B cell (primary cell): ENCODE measurements at regions of chr2 and their contacts with region 1.

Region 1: DNA sequence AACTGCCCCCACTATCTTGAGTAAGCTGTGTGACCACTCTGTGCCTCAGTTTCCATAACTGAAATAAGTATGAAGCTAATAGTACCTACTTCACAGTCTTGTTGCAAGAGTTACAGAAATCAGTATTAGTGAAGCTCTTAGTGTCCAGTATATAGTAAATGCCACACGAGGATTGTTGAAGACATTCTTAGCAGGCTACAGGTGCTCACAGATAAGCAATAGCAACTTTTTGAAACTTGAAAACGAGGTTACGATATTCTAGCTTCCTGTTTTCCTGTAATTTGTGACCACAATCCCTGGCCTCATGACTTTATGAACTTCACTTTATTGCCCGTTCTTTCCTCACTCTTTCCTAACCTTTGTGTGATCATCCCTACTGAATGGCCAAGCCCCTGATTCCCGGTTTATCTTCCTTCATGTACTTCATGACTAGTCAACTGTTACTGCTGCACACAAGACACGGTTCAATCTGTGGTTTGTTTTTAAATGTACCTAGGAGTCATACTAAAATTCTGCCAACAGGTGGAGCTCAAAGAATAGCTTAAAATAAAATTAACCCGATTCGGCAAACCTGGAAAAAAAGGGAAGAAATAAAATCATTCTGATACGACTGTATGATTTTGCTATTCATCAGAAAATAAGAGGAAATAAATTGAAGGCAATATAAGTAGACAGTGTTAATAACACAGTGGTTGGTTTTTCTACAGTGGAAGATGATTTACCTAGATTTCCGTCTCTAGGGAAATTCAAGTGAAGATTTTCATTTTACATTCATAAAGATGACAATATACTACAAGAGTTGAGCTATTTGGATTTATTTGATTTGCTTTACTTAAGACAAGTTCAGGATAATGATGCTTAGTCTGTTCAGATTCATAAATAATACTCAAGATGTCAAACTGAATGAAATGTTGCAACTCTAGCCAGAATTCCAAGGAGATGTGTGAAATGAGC is 38.1 kb upstream of the STAT1 start:
- DNase-seq: peak; percentile 71
- ATAC-seq: peak; percentile 64
- H3K4me3 ChIP-seq: peak overlapping the region in 1 of 5 experiments; percentile 3
- H3K4me3 Mint-ChIP-seq: no peak overlapping the region
- H3K27ac ChIP-seq: no peak overlapping the region
- H3K27ac Mint-ChIP-seq: no peak overlapping the region
- H3K4me1 ChIP-seq: peaks cover 6 to 10% of the 10 kb centered on the region in 2 donors
- H3K4me1 Mint-ChIP-seq: no peaks in the 10 kb centered on the region
- H3K27me3 ChIP-seq: peaks cover 0 to 10% (median 4%) of the 10 kb centered on the region in 4 experiments
- H3K27me3 Mint-ChIP-seq: peaks cover 21% of the 10 kb centered on the region
- CTCF ChIP-seq: peak; percentile 86

Region 2: DNA sequence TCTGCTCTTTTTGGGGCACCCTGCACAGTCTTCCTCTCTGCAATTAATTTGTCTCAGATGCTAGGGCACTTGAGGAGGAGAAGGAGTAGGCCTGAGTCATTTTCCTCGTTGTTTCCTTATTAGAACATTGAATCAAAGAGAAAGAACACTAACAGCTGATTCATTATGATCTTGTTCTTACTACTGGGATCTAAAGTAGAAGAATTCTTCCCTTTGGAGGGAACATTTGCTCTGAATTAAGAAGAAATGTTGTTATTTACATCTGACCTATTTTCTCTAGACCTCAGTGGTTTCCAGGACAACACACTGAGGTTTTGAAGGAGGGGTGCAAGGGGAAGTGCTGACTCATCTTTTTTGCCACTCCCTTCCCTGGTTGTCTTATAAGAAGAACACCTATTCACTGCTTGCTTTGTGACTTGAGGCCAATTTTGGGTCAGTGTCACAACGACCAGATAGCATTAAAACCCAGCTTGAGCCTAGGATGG is 13.8 kb before region 1 on chr2:
- CTCF ChIA-PET with region 1: interaction called, 17 read pairs
- POLR2A ChIA-PET with region 1: interaction called, 3 read pairs
- intact Hi-C with region 1: no loop called
- DNase-seq: no peak
- ATAC-seq: no peak
- H3K4me3 ChIP-seq: no peak overlapping the region
- H3K4me3 Mint-ChIP-seq: no peak overlapping the region
- H3K27ac ChIP-seq: no peak overlapping the region
- H3K27ac Mint-ChIP-seq: no peak overlapping the region
- H3K4me1 ChIP-seq: no peaks in the 10 kb centered on the region
- H3K4me1 Mint-ChIP-seq: no peaks in the 10 kb centered on the region
- H3K27me3 ChIP-seq: no peaks in the 10 kb centered on the region
- H3K27me3 Mint-ChIP-seq: peaks cover 10% of the 10 kb centered on the region
- CTCF ChIP-seq: no peak

Region 3: DNA sequence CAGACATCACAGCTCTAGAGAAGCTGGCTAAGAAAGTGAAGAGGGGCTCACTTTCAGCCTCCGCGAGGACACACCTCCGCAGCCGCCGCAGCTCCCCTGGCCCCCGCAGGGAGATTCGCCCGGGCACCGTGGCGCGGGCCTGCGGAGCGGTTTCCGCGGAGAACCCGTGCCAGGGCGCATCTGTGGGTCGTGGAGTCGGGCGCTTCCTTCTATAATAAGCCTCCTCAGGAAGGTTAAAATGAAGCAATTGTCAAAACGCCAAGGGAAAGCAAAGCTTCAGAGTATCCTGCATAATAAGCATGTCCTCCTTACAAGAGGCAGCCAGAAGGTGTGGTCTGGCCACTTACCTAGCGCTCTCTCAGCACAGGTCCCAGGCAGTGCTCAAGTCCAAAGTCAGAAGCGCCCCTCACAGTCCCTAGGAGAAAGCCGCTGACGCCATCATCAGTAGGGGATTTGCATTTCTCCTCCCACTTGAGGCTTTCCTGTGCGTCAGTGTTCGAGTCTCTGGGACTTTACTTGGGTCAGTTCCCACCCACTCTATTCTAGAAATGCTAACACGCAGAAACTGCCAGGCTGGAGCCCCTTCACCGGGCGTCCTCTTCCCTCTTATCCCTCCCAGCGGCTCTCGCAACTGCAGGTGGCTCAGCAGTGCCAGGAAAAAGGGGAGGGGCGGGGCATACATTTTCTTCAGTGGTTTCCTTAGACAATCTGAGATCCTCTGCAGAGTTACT is 98.7 kb after region 1 on chr2 and contains the start of gene STAT4:
- CTCF ChIA-PET with region 1: interaction called, 418 read pairs
- POLR2A ChIA-PET with region 1: interaction called, 8 read pairs
- intact Hi-C with region 1: loop called (anchors 1 kb)
- DNase-seq: peak; percentile 88
- ATAC-seq: peak; percentile 91
- H3K4me3 ChIP-seq: peak within 1 kb of the TSS; percentile 52 to 97 (median 72)
- H3K4me3 Mint-ChIP-seq: peak within 1 kb of the TSS; percentile 94
- H3K27ac ChIP-seq: peak within 1 kb of the TSS; percentile 38 to 53
- H3K27ac Mint-ChIP-seq: peak within 1 kb of the TSS; percentile 85
- H3K4me1 ChIP-seq: peaks cover 3 to 16% of the 10 kb centered on the region in 2 donors
- H3K4me1 Mint-ChIP-seq: peaks cover 30% of the 10 kb centered on the region
- H3K27me3 ChIP-seq: no peaks in the 10 kb centered on the region
- H3K27me3 Mint-ChIP-seq: peaks cover 13% of the 10 kb centered on the region
- CTCF ChIP-seq: no peak
- total RNA-seq, gene STAT4: 58.9 and 62.1 TPM in 2 replicates

Region 4: DNA sequence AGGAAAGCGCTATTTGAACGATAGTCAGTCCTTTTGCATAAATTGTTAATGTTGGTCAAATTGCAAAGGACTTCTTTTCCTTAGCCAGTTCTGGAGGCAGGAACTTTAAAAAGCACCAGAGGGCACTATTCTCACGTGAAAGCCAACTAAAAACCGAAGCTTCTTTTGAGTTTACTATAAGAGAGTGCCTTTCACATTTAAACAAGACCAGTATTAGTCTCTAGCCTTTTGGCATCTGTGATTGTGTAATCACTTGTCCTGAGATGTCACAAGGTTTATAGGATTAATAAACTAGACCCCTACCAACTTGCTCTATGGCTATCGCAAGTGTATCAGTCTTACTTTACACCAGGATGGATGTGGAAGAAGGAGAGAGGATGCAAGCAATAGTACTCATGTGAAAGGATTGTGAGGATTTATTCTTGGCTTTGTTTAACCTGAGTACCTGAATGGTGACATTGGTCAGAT is 113.1 kb after region 1 on chr2:
- CTCF ChIA-PET with region 1: interaction called, 21 read pairs
- POLR2A ChIA-PET with region 1: no interaction called
- intact Hi-C with region 1: no loop called
- DNase-seq: peak; percentile 53
- ATAC-seq: peak; percentile 60
- H3K4me3 ChIP-seq: no peak overlapping the region
- H3K4me3 Mint-ChIP-seq: no peak overlapping the region
- H3K27ac ChIP-seq: no peak overlapping the region
- H3K27ac Mint-ChIP-seq: no peak overlapping the region
- H3K4me1 ChIP-seq: no peaks in the 10 kb centered on the region
- H3K4me1 Mint-ChIP-seq: peaks cover 3% of the 10 kb centered on the region
- H3K27me3 ChIP-seq: peaks cover 0 to 5% (median 0%) of the 10 kb centered on the region in 4 experiments
- H3K27me3 Mint-ChIP-seq: peaks cover 9% of the 10 kb centered on the region
- CTCF ChIP-seq: peak; percentile 79

Region 5: DNA sequence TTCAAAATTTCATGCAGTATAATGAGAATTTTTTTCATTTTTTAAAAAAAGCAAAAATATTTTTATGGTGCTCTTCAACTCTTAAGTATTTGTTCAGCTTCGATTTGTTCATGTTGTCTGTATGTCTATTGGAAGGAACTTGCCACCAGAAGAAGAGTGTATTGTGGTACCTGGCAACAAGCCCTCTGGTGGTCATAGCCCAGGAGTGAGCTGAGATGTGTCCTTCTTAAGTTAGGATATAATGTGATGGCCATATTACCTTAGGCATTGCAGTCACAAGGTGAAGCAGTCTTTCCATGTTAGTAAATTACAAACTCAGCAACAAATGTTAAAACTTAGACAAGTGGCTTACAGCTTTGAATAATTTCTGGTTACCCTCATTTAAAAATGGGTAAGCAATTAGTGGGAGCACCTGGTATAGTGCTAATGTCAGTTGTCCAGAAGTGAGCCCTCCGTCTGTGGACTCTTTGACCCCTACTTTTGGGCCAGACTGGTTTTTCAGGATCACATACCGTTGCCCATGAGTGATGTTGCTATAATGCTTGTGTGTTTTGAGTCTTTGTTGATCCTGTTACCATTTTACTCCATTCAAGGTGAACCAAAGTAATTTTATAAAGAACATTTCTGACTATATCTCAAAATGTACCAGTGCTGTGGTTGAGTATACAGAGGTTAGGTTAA is 250.5 kb after region 1 on chr2:
- CTCF ChIA-PET with region 1: interaction called, 7 read pairs
- POLR2A ChIA-PET with region 1: no interaction called
- intact Hi-C with region 1: loop called (anchors 10 kb)
- DNase-seq: peak; percentile 57
- ATAC-seq: peak; percentile 53
- H3K4me3 ChIP-seq: no peak overlapping the region
- H3K4me3 Mint-ChIP-seq: no peak overlapping the region
- H3K27ac ChIP-seq: no peak overlapping the region
- H3K27ac Mint-ChIP-seq: no peak overlapping the region
- H3K4me1 ChIP-seq: peaks cover 4 to 8% of the 10 kb centered on the region in 2 donors
- H3K4me1 Mint-ChIP-seq: peaks cover 10% of the 10 kb centered on the region
- H3K27me3 ChIP-seq: no peaks in the 10 kb centered on the region
- H3K27me3 Mint-ChIP-seq: peaks cover 7% of the 10 kb centered on the region
- CTCF ChIP-seq: peak; percentile 47

Region 6: GRCh38 chr2:191521608-191522208 is 469.6 kb after region 1 on chr2:
- CTCF ChIA-PET with region 1: interaction called, 35 read pairs
- POLR2A ChIA-PET with region 1: no interaction called
- intact Hi-C with region 1: no loop called
- DNase-seq: peak; percentile 37
- ATAC-seq: peak; percentile 33
- H3K4me3 ChIP-seq: no peak overlapping the region
- H3K4me3 Mint-ChIP-seq: no peak overlapping the region
- H3K27ac ChIP-seq: no peak overlapping the region
- H3K27ac Mint-ChIP-seq: no peak overlapping the region
- H3K4me1 ChIP-seq: no peaks in the 10 kb centered on the region
- H3K4me1 Mint-ChIP-seq: no peaks in the 10 kb centered on the region
- H3K27me3 ChIP-seq: peaks cover 0 to 4% (median 0%) of the 10 kb centered on the region in 4 experiments
- H3K27me3 Mint-ChIP-seq: peaks cover 4% of the 10 kb centered on the region
- CTCF ChIP-seq: peak; percentile 92